Gastrocnemius medialis (tissue), 4 donors: ENCODE measurements at regions of chr4 and their contacts with region 1.

Region 1: DNA sequence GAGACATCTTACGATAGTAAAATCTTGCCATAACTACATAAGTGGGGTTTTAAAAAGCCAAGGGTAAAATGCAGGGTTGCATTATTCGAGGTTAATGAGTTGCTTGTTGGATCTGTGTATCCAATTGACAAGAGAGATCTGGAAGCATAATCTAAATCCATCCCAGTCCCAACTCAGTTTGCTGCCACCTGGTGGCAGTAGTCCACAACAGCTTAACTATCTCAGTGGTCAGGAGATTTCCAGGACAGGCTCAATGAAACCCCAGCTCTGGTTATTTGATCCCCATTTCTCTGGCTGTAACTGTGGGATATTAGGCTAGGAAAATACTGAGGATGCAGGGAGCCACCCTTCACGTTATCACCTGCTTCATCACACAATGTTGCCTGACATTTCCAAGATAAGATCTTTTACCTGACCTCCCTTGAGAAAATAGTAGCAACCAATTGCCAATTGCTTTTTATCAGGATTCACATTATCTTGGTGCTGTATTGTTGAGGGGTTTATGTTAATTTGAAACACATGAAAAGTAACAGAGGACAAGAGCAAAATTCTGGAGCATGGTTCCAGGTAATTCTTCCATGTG is 88.2 kb upstream of the TNIP3 start:
- DNase-seq: peak; percentile 12 to 46
- ATAC-seq: peak; percentile 54 to 81
- H3K4me3 ChIP-seq: no peak overlapping the region
- H3K27ac ChIP-seq: no peak overlapping the region
- H3K4me1 ChIP-seq: no peaks in the 10 kb centered on the region
- H3K27me3 ChIP-seq: no peaks in the 10 kb centered on the region
- CTCF ChIP-seq: peak; percentile 48 to 79 (median 66)
- POLR2A ChIP-seq: no peak

Region 2: DNA sequence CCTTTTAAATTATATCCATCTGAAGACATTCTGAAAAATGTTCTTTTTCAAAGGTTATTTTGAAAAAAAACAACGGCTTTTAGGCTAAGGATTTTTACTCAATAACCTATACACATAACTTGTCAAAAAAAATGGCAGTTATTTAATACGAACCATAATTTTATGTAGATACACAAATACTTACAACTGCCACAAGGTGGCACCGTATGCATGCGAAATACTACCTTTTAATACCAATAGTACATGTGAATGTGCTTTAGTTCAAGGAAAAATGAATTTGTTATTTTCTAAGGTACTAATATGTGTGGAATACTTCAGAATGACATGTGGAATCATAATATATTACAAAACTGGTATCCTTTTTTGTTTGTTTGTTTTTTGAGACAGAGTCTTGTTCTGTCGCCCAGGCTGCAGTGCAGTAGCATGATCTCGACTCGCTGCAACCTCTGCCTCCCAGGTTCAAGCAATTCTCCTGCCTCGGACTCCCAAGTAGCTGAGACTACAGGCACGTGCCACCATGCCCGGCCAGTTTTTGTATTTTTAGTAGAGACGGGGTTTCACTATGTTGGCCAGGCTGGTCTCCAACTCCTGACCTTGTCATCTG is 1181.0 kb before region 1 on chr4:
- in situ Hi-C with region 1: no loop called
- intact Hi-C with region 1: loop called (anchors 1 kb)
- DNase-seq: no peak
- ATAC-seq: no peak
- H3K4me3 ChIP-seq: no peak overlapping the region
- H3K27ac ChIP-seq: peak overlapping the region in 1 of 4 donors; percentile 7
- H3K4me1 ChIP-seq: peaks cover 26 to 28% of the 10 kb centered on the region in 2 donors
- H3K27me3 ChIP-seq: no peaks in the 10 kb centered on the region
- CTCF ChIP-seq: peak; percentile 44 to 81 (median 48)
- POLR2A ChIP-seq: no peak

Region 3: DNA sequence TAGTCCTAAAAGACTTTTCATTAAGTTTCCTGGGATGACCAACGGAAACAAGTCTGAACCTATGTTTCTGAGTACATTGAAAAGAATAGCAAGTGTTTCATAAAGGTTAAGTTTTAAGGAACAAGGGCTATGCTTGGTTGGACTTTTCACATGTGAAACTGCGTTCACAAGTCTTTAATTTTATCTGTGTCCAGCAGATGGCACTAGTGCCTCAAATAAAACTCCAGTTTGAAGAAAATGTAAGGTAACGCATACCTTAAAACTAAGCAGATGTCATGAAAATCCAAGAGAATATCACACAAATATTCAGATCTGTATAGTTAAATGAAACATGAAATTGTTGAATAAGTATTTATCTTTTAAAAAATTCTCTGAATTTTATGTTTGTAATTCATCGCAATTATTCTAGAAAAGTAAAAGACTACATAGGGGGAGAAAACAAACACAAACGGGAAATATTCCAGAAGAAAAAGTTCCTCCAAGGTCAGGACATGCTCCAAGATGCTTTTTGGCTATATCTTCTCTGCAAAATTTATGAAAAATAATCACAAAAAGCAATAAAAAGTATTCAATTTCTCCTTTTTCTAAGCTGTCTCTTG is 1096.1 kb before region 1 on chr4:
- in situ Hi-C with region 1: loop called (anchors 10 to 25 kb)
- intact Hi-C with region 1: loop called (anchors 5 kb)
- DNase-seq: no peak
- ATAC-seq: peak in 1 of 2 donors; percentile 60
- H3K4me3 ChIP-seq: no peak overlapping the region
- H3K27ac ChIP-seq: no peak overlapping the region
- H3K4me1 ChIP-seq: no peaks in the 10 kb centered on the region
- H3K27me3 ChIP-seq: no peaks in the 10 kb centered on the region
- CTCF ChIP-seq: peak; percentile 30 to 73 (median 61)
- POLR2A ChIP-seq: no peak

Region 4: GRCh38 chr4:121192480-121192879 is 59.8 kb before region 1 on chr4:
- in situ Hi-C with region 1: loop called in 2 of 4 experiments (anchors 5 to 10 kb)
- intact Hi-C with region 1: loop called (anchors 1 kb)
- DNase-seq: no peak
- ATAC-seq: no peak
- H3K4me3 ChIP-seq: peak overlapping the region in 1 of 4 donors; percentile 28
- H3K27ac ChIP-seq: no peak overlapping the region
- H3K4me1 ChIP-seq: no peaks in the 10 kb centered on the region
- H3K27me3 ChIP-seq: no peaks in the 10 kb centered on the region
- CTCF ChIP-seq: peak in 4 of 5 experiments; percentile 30 to 61 (median 44)
- POLR2A ChIP-seq: no peak

Region 5: GRCh38 chr4:121597346-121597934 is 345.1 kb after region 1 on chr4:
- in situ Hi-C with region 1: no loop called
- intact Hi-C with region 1: no loop called
- DNase-seq: no peak
- ATAC-seq: no peak
- H3K4me3 ChIP-seq: no peak overlapping the region
- H3K27ac ChIP-seq: no peak overlapping the region
- H3K4me1 ChIP-seq: peaks cover 0 to 4% of the 10 kb centered on the region in 2 donors
- H3K27me3 ChIP-seq: no peaks in the 10 kb centered on the region
- CTCF ChIP-seq: no peak
- POLR2A ChIP-seq: no peak